B cell (primary cell): ENCODE measurements at regions of chr2 and their contacts with region 1.

Region 1: DNA sequence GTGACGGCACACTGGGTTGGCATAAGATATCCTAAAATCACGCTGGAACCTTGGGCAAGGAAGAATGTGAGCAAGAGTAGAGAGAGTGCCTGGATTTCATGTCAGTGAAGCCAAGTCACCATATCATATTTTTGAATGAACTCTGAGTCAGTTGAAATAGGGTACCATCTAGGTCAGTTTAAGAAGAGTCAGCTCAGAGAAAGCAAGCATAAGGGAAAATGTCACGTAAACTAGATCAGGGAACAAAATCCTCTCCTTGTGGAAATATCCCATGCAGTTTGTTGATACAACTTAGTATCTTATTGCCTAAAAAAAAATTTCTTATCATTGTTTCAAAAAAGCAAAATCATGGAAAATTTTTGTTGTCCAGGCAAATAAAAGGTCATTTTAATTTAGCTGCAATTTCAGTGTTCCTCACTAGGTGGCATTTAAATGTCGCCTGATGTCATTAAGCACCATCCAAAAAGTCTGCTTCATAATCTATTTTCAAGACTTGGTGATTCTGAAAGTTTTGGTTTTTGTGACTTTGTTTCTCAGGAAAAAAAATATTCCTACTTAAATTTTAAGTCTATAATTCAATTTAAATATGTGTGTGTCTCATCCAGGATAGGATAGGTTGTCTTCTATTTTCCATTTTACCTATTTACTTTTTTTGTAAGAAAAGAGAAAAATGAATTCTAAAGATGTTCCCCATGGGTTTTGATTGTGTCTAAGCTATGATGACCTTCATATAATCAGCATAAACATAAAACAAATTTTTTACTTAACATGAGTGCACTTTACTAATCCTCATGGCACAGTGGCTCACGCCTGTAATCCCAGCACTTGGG is 19.6 kb downstream of the RSAD2 start:
- DNase-seq: peak; percentile 45
- ATAC-seq: no peak
- H3K4me3 ChIP-seq: no peak overlapping the region
- H3K4me3 Mint-ChIP-seq: no peak overlapping the region
- H3K27ac ChIP-seq: no peak overlapping the region
- H3K27ac Mint-ChIP-seq: no peak overlapping the region
- H3K4me1 ChIP-seq: no peaks in the 10 kb centered on the region
- H3K4me1 Mint-ChIP-seq: no peaks in the 10 kb centered on the region
- H3K27me3 ChIP-seq: no peaks in the 10 kb centered on the region
- H3K27me3 Mint-ChIP-seq: no peaks in the 10 kb centered on the region
- CTCF ChIP-seq: peak; percentile 82

Region 2: GRCh38 chr2:6909431-6910385 is 12.6 kb after region 1 on chr2:
- CTCF ChIA-PET with region 1: interaction called, 17 read pairs
- POLR2A ChIA-PET with region 1: no interaction called
- intact Hi-C with region 1: no loop called
- DNase-seq: peak; percentile 58
- ATAC-seq: peak; percentile 76
- H3K4me3 ChIP-seq: peak overlapping the region in 1 of 5 experiments; percentile 3
- H3K4me3 Mint-ChIP-seq: peak overlapping the region; percentile 35
- H3K27ac ChIP-seq: peak overlapping the region in 1 of 2 donors; percentile 7
- H3K27ac Mint-ChIP-seq: peak overlapping the region; percentile 11
- H3K4me1 ChIP-seq: peaks cover 24 to 26% of the 10 kb centered on the region in 2 donors
- H3K4me1 Mint-ChIP-seq: peaks cover 27% of the 10 kb centered on the region
- H3K27me3 ChIP-seq: peaks cover 0 to under 1% (median 0%) of the 10 kb centered on the region in 4 experiments
- H3K27me3 Mint-ChIP-seq: no peaks in the 10 kb centered on the region
- CTCF ChIP-seq: no peak

Region 3: GRCh38 chr2:6917071-6917760 is 20.1 kb after region 1 on chr2 and contains the start of gene RNF144A:
- CTCF ChIA-PET with region 1: interaction called, 15 read pairs
- POLR2A ChIA-PET with region 1: no interaction called
- intact Hi-C with region 1: no loop called
- DNase-seq: peak; percentile 77
- ATAC-seq: peak; percentile 94
- H3K4me3 ChIP-seq: peak within 1 kb of the TSS in 4 of 5 experiments; percentile 25 to 57 (median 48)
- H3K4me3 Mint-ChIP-seq: peak within 1 kb of the TSS; percentile 78
- H3K27ac ChIP-seq: no peak within 1 kb of the TSS
- H3K27ac Mint-ChIP-seq: peak within 1 kb of the TSS; percentile 10
- H3K4me1 ChIP-seq: peaks cover 7 to 13% of the 10 kb centered on the region in 2 donors
- H3K4me1 Mint-ChIP-seq: peaks cover 5% of the 10 kb centered on the region
- H3K27me3 ChIP-seq: peaks cover 0 to 17% (median 4%) of the 10 kb centered on the region in 4 experiments
- H3K27me3 Mint-ChIP-seq: peaks cover 8% of the 10 kb centered on the region
- CTCF ChIP-seq: peak; percentile 52
- total RNA-seq, gene RNF144A: 1.6 and 2.5 TPM in 2 replicates

Region 4: GRCh38 chr2:7044261-7045250 is 147.4 kb after region 1 on chr2:
- CTCF ChIA-PET with region 1: interaction called, 33 read pairs
- POLR2A ChIA-PET with region 1: no interaction called
- intact Hi-C with region 1: loop called (anchors 1 kb)
- DNase-seq: peak; percentile 64
- ATAC-seq: peak; percentile 56
- H3K4me3 ChIP-seq: no peak overlapping the region
- H3K4me3 Mint-ChIP-seq: no peak overlapping the region
- H3K27ac ChIP-seq: no peak overlapping the region
- H3K27ac Mint-ChIP-seq: no peak overlapping the region
- H3K4me1 ChIP-seq: peaks cover 4 to 6% of the 10 kb centered on the region in 2 donors
- H3K4me1 Mint-ChIP-seq: peaks cover 7% of the 10 kb centered on the region
- H3K27me3 ChIP-seq: peaks cover 0 to 16% (median 7%) of the 10 kb centered on the region in 4 experiments
- H3K27me3 Mint-ChIP-seq: peaks cover 32% of the 10 kb centered on the region
- CTCF ChIP-seq: peak; percentile 98

Region 5: GRCh38 chr2:7083577-7084509 is 186.7 kb after region 1 on chr2:
- CTCF ChIA-PET with region 1: interaction called, 3 read pairs
- POLR2A ChIA-PET with region 1: no interaction called
- intact Hi-C with region 1: loop called (anchors 1 kb)
- DNase-seq: no peak
- ATAC-seq: no peak
- H3K4me3 ChIP-seq: no peak overlapping the region
- H3K4me3 Mint-ChIP-seq: no peak overlapping the region
- H3K27ac ChIP-seq: no peak overlapping the region
- H3K27ac Mint-ChIP-seq: no peak overlapping the region
- H3K4me1 ChIP-seq: no peaks in the 10 kb centered on the region
- H3K4me1 Mint-ChIP-seq: no peaks in the 10 kb centered on the region
- H3K27me3 ChIP-seq: no peaks in the 10 kb centered on the region
- H3K27me3 Mint-ChIP-seq: peaks cover 13% of the 10 kb centered on the region
- CTCF ChIP-seq: peak; percentile 47